ENCODE measurements at regions of chr10 and their contacts with region 1.

Region 1: DNA sequence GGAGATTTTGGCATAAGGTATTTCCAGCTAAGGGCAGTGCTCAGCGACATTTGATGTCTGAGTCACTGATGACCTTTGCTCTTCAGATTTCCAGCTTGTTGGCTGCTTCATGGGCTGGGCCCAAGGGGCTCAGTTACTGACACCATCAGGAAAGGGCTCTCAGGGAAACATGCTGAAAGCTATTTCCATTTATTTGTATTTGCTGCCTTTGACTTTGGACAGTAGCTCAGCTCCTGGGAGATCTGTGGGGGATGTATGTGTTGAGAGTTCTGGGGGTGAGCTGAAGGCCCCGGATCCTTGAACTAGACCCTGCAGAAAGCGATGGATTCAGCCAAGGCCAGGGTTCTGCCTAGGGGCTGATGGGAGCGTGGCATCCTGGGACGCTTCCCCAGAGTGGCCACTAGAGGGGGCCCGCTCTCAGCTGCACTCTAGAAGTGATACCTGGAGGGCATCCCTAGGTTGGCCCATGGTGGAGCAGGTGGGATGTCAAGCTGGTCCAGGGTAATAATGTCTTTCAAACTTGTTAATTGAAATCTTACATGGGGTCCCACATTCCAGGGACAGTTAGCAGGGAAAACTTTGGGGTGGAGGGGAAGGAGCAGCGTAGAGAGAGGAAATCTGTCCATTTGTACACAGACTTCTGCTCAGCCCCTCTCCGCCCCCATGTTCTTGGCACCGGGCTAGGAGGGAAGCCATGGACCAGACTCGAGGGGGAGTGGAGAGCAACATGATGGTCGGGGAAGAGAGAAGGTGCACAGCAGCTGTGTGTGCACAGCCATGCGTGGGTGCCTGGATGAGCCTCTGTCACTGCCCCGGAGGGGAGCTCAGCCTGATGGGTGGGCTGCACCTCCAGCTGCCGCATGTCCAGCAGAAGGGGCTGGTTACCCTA is 3.0 kb upstream of the BTBD16 start:
- DNase-seq: peak; percentile 77

Region 2: DNA sequence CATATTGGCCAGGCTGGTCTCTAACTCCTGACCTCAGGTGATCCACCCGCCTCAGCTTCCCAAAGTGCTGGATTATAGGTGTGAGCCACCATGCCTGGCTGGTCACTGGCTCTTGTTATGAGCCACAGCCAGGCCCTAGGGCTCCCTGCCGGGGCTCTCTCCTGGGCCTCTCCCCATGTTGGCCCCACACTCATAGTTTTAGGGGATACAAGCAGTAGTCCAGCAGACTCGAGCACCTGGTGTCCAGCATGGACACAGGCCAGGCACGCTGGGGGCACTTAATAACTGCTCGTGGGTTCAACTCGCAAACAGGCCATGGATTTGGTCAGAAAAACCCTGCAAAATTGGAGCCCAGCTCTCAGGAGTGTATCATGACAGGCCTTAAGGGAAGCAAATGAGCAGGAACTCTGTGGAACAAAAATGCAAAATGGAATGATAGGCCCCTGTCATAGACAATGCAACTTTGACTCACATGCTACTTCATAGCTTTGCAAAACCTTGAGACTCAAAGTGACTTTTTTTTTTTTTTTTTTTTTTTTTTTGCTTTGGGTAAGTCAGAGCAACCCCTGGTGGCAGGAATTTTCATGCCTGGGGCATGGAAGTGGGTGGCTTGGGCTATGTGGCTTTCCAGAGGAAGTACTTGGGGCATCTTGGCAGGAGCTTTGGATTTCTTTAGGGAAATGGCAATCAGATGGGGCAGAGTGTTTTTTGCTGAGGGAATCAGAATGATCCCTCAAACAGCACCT is 216.7 kb before region 1 on chr10:
- intact Hi-C with region 1: loop called (anchors 10 kb)
- DNase-seq: no peak